Heart left ventricle (tissue), 16 donors: ENCODE measurements at regions of chr1 and their contacts with region 1.

Region 1: DNA sequence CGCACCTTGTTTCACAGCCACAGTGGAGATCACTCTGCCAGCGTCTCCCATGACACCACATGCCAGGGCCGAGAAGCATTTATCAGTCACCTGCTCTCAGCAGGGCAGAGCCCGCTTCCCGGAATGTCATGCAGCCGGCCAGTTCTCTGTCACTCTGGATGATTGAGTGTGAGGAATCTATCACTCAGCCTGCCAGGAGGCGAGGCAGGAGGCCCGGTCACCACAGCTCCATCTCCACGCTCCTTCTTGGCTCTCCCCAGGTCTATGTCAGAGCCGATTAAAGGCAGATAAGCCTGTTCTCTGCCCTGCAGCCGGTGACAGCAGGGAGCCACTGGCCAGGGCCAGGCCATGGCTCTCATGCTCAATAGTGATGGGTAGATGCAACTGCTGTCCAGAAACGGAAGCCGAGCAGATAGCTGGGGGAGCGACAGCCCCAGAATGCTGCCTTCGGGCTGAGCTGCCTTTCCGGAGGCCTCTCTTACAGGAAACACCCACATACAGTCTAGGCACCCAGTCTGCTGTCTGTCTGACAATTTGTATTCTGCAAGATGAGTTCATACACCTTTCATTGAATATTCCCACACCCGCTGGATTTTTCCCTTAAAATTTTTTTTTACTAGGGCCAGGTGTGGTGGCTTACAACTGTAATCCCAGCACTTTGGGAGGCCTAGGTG is 64.1 kb downstream of the ACTL8 start:
- DNase-seq: peak; percentile 43 to 73 (median 62)
- ATAC-seq: peak; percentile 85 to 96 (median 86)
- H3K4me3 ChIP-seq: no peak overlapping the region
- H3K27ac ChIP-seq: peak overlapping the region in 1 of 12 donors; percentile 13
- H3K4me1 ChIP-seq: peaks cover 0 to 7% (median 0%) of the 10 kb centered on the region in 12 donors
- H3K27me3 ChIP-seq: peaks cover 0 to 12% (median 0%) of the 10 kb centered on the region in 9 donors
- CTCF ChIP-seq: no peak
- POLR2A ChIP-seq: no peak

Region 2: GRCh38 chr1:17624611-17625233 is 194.5 kb before region 1 on chr1:
- intact Hi-C with region 1: no loop called
- DNase-seq: peak; percentile 52 to 91 (median 76)
- ATAC-seq: peak; percentile 74 to 85 (median 79)
- H3K4me3 ChIP-seq: no peak overlapping the region
- H3K27ac ChIP-seq: peak overlapping the region in 11 of 12 donors; percentile 49 to 84 (median 73)
- H3K4me1 ChIP-seq: peaks cover 0 to 45% (median 28%) of the 10 kb centered on the region in 12 donors
- H3K27me3 ChIP-seq: no peaks in the 10 kb centered on the region
- CTCF ChIP-seq: no peak
- POLR2A ChIP-seq: no peak

Region 3: GRCh38 chr1:17831619-17832018 is 12.4 kb after region 1 on chr1:
- intact Hi-C with region 1: loop called in 1 of 10 experiments (anchors 1 kb)
- DNase-seq: peak in 3 of 5 donors; percentile 15 to 48 (median 29)
- ATAC-seq: no peak
- H3K4me3 ChIP-seq: no peak overlapping the region
- H3K27ac ChIP-seq: no peak overlapping the region
- H3K4me1 ChIP-seq: peaks cover 0 to 9% (median 0%) of the 10 kb centered on the region in 12 donors
- H3K27me3 ChIP-seq: peaks cover 0 to 15% (median 0%) of the 10 kb centered on the region in 9 donors
- CTCF ChIP-seq: no peak
- POLR2A ChIP-seq: no peak